T-cell (primary cell): ENCODE measurements at regions of chr5 and their contacts with region 1.

Region 1: DNA sequence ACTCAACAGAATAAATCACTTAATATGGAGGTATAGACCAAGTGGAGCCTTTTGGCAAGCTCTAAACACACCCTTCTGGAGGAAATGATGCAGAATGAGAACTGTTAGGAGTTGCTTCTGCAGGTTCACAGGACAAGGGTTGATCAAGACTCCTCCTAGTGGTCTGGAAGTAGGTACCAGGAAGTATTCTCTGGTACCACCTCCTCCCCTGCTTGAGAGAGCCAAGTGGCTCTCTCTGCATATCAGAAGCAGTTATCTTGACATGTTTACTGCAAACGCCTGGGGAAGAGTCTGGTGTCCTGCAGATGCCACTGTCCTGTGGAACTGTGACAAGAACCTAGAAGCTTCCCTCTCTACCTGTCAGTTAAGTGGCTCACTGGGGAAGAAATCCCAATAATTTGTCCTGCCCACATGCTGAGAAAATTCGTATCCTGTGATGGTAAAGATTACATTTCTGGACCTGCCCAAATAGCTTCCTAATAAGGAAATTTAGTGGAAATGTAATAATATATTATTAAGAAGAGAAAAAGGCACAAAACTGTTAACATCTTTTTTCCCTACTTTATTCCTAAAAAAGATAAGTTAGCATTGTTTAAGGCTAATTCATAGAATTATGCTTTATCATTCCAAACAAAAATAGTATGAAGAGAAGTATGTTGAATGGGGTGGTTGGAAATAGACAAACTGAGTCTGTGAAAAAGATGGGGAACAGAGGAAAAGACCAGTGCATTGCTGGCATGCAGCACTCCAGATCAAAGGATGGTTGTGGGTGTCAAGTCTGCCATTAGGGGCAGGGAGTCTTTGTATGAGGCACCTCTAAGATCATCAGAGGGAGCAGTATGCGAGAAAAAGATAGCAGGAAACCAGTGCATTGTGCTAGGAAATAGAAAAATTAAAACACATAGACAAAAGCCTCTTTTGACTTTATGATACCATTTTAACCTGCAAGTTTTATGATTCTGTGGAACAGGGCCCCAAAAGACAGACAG is 118.8 kb downstream of the CDC42SE2 start:
- DNase-seq: peak in 33 of 35 experiments; percentile 8 to 88 (median 51)
- ATAC-seq: peak; percentile 68 to 74 (median 72)
- H3K4me3 ChIP-seq: no peak overlapping the region
- H3K4me3 Mint-ChIP-seq: peak overlapping the region; percentile 34 to 69 (median 38)
- H3K27ac ChIP-seq: peak overlapping the region; percentile 99
- H3K27ac Mint-ChIP-seq: peak overlapping the region; percentile 97 to 100
- H3K4me1 ChIP-seq: peaks cover 61 to 68% of the 10 kb centered on the region in 2 experiments
- H3K4me1 Mint-ChIP-seq: peaks cover 85 to 92% (median 91%) of the 10 kb centered on the region in 3 donors
- H3K27me3 ChIP-seq: no peaks in the 10 kb centered on the region
- H3K27me3 Mint-ChIP-seq: no peaks in the 10 kb centered on the region

Region 2: DNA sequence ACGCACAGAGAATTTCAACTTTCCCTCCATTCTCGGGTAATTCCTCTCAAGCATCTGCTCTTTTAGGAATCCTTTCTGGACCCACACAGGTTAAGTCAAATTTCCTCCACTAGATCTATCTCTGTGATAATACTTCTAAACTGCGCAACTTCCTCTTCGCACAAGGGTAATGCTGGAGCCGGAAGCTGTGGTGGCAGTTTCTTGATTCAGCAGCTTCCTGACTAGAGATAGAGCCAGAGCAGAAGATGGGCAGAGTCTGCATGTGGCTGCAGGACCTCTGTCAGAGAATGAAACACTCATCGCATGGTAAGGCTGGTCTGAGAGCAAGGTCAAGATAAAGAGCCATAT is 129.9 kb before region 1 on chr5:
- CTCF ChIA-PET with region 1: interaction called in 1 of 2 experiments, 14 read pairs
- POLR2A ChIA-PET with region 1: interaction called, 5 to 8 read pairs
- DNase-seq: peak; percentile 56 to 93 (median 81)
- ATAC-seq: peak; percentile 83 to 90 (median 86)
- H3K4me3 ChIP-seq: peak overlapping the region; percentile 63 to 68
- H3K4me3 Mint-ChIP-seq: peak overlapping the region; percentile 75 to 96 (median 91)
- H3K27ac ChIP-seq: peak overlapping the region; percentile 98
- H3K27ac Mint-ChIP-seq: peak overlapping the region; percentile 98 to 99
- H3K4me1 ChIP-seq: peaks cover 48 to 55% of the 10 kb centered on the region in 2 experiments
- H3K4me1 Mint-ChIP-seq: peaks cover 71 to 76% (median 73%) of the 10 kb centered on the region in 3 donors
- H3K27me3 ChIP-seq: no peaks in the 10 kb centered on the region
- H3K27me3 Mint-ChIP-seq: no peaks in the 10 kb centered on the region

Region 3: DNA sequence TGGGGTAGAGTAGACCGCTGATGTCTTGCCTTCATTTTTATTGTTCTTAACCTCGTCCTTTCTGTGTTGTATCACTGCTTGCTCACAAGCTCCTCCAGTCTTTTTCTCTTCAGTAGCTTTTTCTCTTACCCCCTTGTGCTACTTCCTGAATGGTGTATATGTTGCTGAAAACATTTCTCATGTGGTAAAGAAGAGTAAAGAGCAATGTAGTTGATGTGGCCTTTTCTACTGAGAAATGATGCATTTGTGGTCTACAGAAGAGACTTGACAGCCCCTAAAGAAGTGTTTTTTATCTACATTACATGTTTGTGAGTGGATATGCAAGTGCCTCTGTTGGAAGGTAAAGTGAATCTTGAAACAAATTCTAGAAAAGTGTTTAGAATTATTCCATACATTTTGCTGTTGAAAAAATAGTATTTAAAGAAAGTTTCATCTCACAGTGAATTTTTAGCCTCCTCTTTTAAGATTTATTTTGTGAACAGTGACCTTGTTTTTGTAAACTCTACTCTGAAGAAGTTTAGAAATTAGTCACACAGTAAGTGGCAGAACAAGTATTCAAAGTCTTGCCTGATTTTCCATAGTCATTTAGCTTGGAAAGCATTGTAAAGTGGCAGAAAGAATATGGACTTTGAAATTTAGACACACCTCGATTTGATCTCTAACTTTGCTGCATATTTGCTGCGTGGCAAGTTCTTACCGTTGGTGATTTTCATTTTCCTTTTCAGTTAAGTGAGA is 101.4 kb before region 1 on chr5:
- CTCF ChIA-PET with region 1: interaction called in 1 of 2 experiments, 12 read pairs
- POLR2A ChIA-PET with region 1: interaction called, 6 to 11 read pairs
- DNase-seq: peak in 5 of 35 experiments; percentile 9 to 85 (median 48)
- ATAC-seq: peak; percentile 84 to 91 (median 86)
- H3K4me3 ChIP-seq: peak overlapping the region; percentile 29 to 43
- H3K4me3 Mint-ChIP-seq: peak overlapping the region; percentile 75 to 81 (median 77)
- H3K27ac ChIP-seq: peak overlapping the region; percentile 81
- H3K27ac Mint-ChIP-seq: peak overlapping the region; percentile 95 to 96
- H3K4me1 ChIP-seq: peaks cover 47 to 56% of the 10 kb centered on the region in 2 experiments
- H3K4me1 Mint-ChIP-seq: peaks cover 89 to 92% (median 92%) of the 10 kb centered on the region in 3 donors
- H3K27me3 ChIP-seq: no peaks in the 10 kb centered on the region
- H3K27me3 Mint-ChIP-seq: no peaks in the 10 kb centered on the region

Region 4: DNA sequence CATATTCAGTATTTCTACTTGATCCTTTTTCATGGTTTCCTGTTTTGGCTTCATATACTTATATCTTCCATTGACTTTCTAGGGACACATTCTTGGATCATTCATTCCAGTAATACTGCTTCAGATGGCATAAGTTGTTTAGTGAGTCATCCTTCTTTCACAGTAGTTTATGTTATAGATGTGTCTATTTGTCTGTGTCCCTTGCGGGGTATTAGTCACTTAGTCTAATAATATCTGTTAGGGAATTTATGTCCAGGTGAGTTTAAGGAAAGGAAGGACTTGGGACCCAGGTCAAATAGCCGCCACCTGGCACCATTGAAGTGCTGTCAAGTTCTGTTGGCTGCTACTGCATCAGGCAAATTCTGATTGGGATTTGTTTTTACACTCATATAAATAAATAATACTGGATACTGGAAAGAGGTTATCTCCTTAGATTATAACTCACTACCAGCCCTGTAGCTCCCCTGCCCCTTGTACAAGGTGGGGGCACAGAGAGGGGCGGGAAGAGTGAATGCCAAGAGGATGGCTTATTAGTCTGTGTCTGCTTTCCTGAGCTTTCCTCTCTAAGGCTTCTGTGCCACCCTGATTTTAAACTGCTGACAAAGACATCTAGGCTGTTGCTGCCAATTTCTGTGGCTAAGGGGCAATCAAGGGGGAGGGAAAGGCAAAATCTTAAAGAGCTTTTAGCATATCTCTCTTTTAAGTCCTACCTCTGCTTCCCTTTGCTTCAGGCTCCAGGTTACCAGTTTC is 54.0 kb before region 1 on chr5:
- CTCF ChIA-PET with region 1: interaction called, 6 to 10 read pairs
- POLR2A ChIA-PET with region 1: no interaction called
- DNase-seq: no peak
- ATAC-seq: peak in 1 of 4 experiments; percentile 34
- H3K4me3 ChIP-seq: no peak overlapping the region
- H3K4me3 Mint-ChIP-seq: peak overlapping the region in 1 of 3 donors; percentile 21
- H3K27ac ChIP-seq: peak overlapping the region; percentile 8
- H3K27ac Mint-ChIP-seq: peak overlapping the region; percentile 54 to 76
- H3K4me1 ChIP-seq: peaks cover 14 to 36% of the 10 kb centered on the region in 2 experiments
- H3K4me1 Mint-ChIP-seq: peaks cover 84 to 88% (median 86%) of the 10 kb centered on the region in 3 donors
- H3K27me3 ChIP-seq: no peaks in the 10 kb centered on the region
- H3K27me3 Mint-ChIP-seq: no peaks in the 10 kb centered on the region

Region 5: GRCh38 chr5:132479111-132479951 is 1096.6 kb after region 1 on chr5:
- CTCF ChIA-PET with region 1: no interaction called
- POLR2A ChIA-PET with region 1: interaction called in 1 of 2 experiments, 14 read pairs
- DNase-seq: peak in 2 of 35 experiments; percentile 0 to 43
- ATAC-seq: no peak
- H3K4me3 ChIP-seq: no peak overlapping the region
- H3K4me3 Mint-ChIP-seq: peak overlapping the region in 1 of 3 donors; percentile 13
- H3K27ac ChIP-seq: peak overlapping the region; percentile 43
- H3K27ac Mint-ChIP-seq: peak overlapping the region; percentile 83 to 87
- H3K4me1 ChIP-seq: peaks cover 3 to 94% of the 10 kb centered on the region in 2 experiments
- H3K4me1 Mint-ChIP-seq: peaks cover 81 to 87% (median 83%) of the 10 kb centered on the region in 3 donors
- H3K27me3 ChIP-seq: no peaks in the 10 kb centered on the region
- H3K27me3 Mint-ChIP-seq: no peaks in the 10 kb centered on the region